Right ventricle myocardium superior (tissue), 1 donor: ENCODE measurements at regions of chr9 and their contacts with region 1.

Region 1: DNA sequence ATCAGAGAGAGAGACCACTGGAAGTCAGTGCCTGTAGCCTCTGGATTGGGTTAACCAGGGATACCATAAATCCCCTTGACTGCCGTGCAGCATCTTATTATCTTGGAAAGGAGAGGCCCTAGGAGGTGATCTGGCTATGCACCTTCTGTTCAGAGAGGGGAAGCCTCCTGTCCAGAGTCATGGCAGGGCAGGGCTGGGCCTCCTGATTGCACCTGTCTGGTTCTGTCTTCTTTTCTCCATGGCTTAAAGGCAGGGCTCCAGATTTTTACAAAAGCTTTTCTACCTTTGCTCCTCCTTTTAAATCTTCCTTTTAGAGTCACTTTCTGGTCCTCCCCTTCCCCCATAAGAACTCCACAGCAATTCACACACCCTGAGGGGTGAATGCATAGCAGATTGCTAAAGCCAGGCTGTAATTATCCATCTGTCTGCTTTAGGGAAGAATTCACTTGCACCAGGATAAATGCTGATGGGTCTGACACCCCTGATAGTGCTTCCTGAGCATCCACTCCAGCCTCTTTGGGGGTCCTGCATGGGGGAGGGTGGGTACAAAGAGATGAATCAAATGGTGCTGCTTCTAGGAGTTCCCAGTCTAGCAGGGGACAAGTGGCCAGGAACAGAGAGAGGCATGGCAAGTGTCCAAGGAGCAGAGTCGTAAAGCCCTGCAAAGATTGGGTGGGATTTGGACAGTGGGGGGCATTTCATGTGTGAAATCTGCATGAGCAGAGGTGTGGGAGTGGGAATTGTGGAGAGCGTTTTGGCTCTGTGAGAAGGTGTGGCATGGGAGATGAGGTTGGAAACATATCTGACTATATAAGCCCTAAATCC is 141.3 kb upstream of the ALDH1B1 start:
- DNase-seq: no peak
- ATAC-seq: no peak

Region 2: DNA sequence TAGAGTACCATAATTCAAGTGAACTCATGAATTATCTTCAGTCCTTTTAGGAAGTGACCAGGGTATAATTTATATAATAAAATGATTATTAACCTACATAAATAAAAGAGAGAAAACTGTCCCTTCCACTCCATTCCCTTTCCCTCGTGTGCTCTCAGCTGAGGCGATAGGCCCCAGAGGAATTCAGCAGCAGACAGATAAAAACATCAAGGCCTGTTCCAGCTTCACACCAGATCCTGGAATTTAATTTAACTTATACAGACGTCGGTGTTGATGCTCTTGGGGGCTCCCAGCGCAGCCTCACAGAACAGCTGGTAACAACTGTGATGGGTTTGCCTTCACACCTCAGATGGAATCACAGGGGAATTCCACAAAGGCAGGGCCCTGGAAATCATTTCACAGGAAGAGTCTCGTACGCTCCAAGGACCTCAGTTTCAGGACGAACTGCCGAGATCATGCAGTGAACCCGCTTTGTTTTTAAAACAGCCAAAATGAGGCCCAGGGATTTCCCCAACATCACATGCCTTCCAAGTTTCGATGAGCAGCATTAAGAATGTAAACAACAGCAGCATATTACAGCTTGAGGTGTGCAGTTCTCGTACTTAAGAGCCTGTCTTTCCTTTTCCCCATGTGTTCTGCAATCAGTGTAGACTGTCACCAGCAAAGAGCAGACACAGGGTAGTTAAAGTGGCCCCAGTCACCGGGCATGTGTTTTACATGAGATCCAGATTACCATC is 67.7 kb after region 1 on chr9:
- intact Hi-C with region 1: loop called (anchors 10 kb)
- DNase-seq: no peak
- ATAC-seq: no peak